ENCODE measurements at regions of chr6 and their contacts with region 1.

Region 1: DNA sequence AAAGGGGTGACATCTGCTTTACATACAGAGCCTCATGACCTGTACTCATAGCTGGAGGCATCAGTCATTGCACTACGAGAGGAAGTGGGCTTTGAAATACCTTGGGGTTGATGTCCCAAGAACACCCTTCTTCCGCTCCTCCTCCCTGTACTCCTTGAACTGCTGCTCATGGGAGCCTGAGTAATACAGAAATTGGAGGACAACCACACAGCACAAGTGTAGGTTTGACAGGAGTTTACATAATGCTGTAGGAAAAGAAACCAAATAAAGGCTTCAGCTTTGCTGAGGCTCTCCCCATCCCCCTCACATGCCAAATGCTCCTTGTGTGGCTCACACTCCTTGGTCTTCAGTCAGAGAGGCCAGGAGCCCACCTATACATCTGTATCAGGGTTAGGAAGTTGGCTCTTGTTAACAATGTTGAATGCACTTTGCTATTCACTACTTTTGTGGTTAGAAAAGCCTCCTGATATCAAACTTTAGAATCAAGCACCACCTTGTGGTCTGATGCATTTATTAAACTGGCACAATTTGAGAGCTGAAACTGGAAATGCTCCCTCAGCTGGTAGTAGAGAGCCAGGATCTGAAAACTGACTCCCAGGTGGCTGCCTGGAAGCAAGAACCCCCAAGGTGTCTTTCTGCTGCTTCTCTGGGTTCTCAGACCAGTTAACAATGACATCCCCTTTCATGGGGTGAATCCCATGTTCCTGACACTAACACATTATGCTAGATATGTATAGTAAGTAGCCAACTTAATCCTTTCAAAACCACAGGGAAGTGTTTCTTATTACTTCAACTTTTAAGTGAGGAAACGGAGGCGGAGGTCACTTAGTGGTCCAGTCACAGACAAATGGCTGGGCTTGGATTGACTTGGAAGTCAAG is 56.2 kb upstream of the EDN1 start:
- DNase-seq: no peak
- ATAC-seq: peak; percentile 79

Region 2: GRCh38 chr6:11592294-11592906 is 641.5 kb before region 1 on chr6:
- intact Hi-C with region 1: loop called (anchors 5 kb)
- DNase-seq: no peak
- ATAC-seq: peak; percentile 80

Region 3: GRCh38 chr6:11654876-11655275 is 579.1 kb before region 1 on chr6:
- intact Hi-C with region 1: loop called (anchors 2 kb)
- DNase-seq: no peak
- ATAC-seq: no peak

Region 4: GRCh38 chr6:12049165-12049564 is 184.8 kb before region 1 on chr6:
- intact Hi-C with region 1: no loop called
- DNase-seq: no peak
- ATAC-seq: no peak

Region 5: DNA sequence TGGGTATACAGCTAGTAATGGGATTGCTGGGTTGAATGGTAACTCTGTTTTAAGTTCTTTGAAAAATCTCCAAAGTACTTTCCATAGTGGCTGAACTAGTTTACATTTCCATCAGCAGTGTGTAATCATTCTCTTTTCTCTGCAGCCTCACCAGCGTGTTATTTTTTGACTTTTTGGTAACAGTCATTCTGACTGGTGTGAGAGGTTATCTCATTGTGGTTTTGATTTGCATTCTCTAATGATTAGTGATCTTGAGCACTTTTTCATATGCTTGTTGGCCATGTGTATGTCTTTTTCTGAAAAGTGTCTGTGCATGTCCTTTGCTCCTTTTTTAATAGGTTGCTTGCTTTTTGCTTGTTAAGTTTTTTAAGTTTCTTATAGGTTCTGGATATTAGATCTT is 288.4 kb after region 1 on chr6:
- intact Hi-C with region 1: no loop called
- DNase-seq: no peak
- ATAC-seq: no peak

Measured in Right ventricle myocardium superior (tissue), 1 donor.